A549 (cell line): ENCODE measurements at regions of chr9 and their contacts with region 1.

Region 1: GRCh38 chr9:136849038-136849959 is at the start of gene PHPT1:
- DNase-seq: peak; percentile 99 to 100
- ATAC-seq: peak; percentile 53 to 80
- H3K4me3 ChIP-seq: peak within 1 kb of the TSS; percentile 87
- H3K27ac ChIP-seq: peak within 1 kb of the TSS; percentile 96 to 97
- H3K4me1 ChIP-seq: peaks cover 22% of the 10 kb centered on the region
- CTCF ChIP-seq: no peak
- EP300 ChIP-seq: no peak
- POLR2A ChIP-seq: peak; percentile 72
- RAD21 ChIP-seq: 0 out of 5 replicates have a peak, but pooled peaks of 1 of the 2 experiments have one; percentile 17
- polyA plus RNA-seq, gene PHPT1: 104 and 123 TPM in 2 replicates

Region 2: DNA sequence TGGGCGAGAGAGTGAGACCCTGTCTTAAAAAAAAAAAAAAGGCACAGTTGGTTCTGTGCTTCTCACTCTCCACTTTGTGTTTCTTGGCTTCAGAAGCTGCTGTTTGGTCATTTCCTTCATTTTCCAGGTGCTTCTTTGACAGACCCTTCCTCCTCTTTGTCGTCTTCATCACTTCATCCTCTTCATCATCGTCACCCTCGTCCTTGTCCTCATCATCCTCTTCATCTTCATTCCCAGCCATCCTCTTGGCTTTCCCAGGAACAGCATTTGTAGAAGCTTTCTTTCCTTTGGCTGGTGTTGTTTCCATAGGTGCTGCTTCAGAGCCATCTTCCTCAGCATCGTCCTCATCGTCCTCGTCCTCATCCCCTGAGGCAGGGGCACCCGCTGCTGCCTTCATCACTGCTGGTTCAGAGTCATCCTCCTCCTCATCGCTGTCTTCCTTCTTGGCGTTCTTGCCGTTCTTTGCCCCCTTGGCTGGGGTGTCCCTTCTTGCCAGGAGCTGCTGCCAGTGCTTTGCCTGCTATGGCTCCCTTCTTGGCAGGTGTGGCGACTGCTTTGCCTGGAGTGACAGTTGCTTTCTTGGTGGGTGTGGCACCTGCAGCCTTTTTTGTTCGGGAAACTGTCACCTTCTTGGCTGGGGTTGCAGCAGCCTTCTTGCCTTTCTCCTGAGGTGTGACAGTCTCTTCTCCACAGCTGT is 34.4 kb before region 1 on chr9:
- CTCF ChIA-PET with region 1: interaction called, 44 read pairs
- POLR2A ChIA-PET with region 1: no interaction called
- DNase-seq: no peak
- ATAC-seq: no peak
- H3K4me3 ChIP-seq: no peak overlapping the region
- H3K27ac ChIP-seq: no peak overlapping the region
- H3K4me1 ChIP-seq: peaks cover 5% of the 10 kb centered on the region; the same call in 2 of the 3 replicates
- CTCF ChIP-seq: no peak
- EP300 ChIP-seq: no peak
- POLR2A ChIP-seq: no peak
- RAD21 ChIP-seq: no peak

Region 3: DNA sequence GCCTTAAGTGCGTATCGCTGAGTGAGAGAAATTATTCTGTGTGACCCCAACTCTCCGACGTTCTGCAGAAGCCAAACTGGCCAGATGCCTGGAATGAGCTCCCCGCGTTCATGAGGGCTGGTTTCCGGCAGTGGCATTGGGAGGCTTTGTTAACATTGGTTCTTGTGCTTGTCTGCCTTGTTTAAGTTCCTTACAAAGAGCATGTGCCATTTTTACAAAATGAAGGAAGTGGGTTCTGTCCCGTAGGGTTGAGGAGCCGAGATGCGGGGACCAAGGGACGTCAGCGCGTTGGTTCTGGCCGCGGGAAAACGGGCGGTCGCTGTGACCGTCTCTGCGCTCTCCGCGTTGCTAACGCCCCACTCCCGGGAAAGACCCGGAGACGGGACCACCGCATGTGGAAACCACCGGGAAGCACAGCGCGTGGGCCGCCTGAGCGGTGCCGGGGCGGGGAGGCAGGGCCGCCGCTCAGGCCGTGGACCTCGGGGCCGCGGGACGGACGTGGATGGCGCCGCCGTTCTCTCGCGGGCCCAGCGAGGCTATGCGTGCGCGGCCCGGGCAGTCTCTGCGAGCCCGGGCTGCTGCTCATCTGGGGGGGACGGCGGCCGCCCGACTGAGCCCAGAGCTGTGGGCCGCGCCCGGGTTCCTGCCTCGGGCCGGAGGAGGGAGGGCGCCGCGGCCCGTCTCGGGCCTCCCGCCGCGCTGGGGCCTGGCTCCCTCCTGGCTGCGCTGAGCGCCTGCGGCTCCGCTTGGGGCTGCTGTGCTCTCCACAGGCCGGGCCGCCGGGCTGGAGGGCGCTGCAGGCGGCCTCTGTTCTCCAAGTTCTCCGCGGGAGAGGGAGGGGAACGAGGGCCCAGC is 28.1 kb before region 1 on chr9:
- CTCF ChIA-PET with region 1: interaction called, 44 read pairs
- POLR2A ChIA-PET with region 1: no interaction called
- DNase-seq: no peak
- ATAC-seq: no peak
- H3K4me3 ChIP-seq: no peak overlapping the region
- H3K27ac ChIP-seq: no peak overlapping the region
- H3K4me1 ChIP-seq: no peaks in the 10 kb centered on the region
- CTCF ChIP-seq: no peak
- EP300 ChIP-seq: no peak
- POLR2A ChIP-seq: no peak
- RAD21 ChIP-seq: no peak

Region 4: GRCh38 chr9:136829981-136830885 is 19.1 kb before region 1 on chr9:
- CTCF ChIA-PET with region 1: interaction called, 72 read pairs
- POLR2A ChIA-PET with region 1: no interaction called
- DNase-seq: no peak
- ATAC-seq: no peak
- H3K4me3 ChIP-seq: no peak overlapping the region
- H3K27ac ChIP-seq: no peak overlapping the region
- H3K4me1 ChIP-seq: no peaks in the 10 kb centered on the region
- CTCF ChIP-seq: no peak
- EP300 ChIP-seq: no peak
- POLR2A ChIP-seq: no peak
- RAD21 ChIP-seq: no peak

Region 5: DNA sequence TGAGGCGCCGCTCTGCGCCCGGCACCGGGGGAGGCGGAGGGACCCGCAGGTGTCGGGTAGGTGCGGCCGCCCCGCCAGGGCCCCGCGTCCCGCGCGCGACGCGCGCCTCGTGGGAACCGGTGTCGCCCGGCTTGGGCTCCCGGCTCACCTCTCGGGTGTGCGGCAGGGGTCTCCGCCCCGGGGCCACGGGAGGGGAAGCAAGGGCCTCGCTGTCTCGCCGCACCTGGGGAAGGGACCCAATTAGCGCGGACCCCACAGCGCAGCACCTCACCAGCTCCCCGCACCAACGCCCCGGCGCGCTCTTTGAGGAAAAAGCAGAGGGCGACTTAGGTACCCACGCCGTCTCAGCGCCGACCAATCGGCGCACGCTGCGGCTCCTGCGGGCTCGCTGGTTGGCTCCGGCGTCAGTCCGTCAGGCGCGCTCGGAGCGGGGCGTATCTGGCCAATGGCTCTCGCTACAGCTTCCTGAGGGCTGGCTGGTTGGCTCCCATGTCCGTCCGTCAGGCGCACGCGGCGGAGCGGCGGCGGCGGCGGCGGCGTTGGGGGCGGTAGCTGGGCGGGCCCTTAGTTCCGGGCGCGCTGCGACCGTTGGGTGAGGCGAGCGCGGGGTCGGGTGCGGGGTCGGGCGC is 36.8 kb after region 1 on chr9 and contains the start of gene TRAF2:
- CTCF ChIA-PET with region 1: interaction called, 23 read pairs
- POLR2A ChIA-PET with region 1: interaction called, 11 read pairs
- DNase-seq: peak; percentile 99 to 100
- ATAC-seq: peak; percentile 82 to 86
- H3K4me3 ChIP-seq: peak within 1 kb of the TSS; percentile 99
- H3K27ac ChIP-seq: peak within 1 kb of the TSS; percentile 98 to 99
- H3K4me1 ChIP-seq: peaks cover 57% of the 10 kb centered on the region
- CTCF ChIP-seq: no peak
- EP300 ChIP-seq: no peak
- POLR2A ChIP-seq: peak; percentile 93
- RAD21 ChIP-seq: no peak
- polyA plus RNA-seq, gene TRAF2: 23.8 and 24.5 TPM in 2 replicates

Region 6: GRCh38 chr9:137095664-137096517 is 246.6 kb after region 1 on chr9:
- CTCF ChIA-PET with region 1: no interaction called
- POLR2A ChIA-PET with region 1: no interaction called
- DNase-seq: no peak
- ATAC-seq: peak; percentile 40 to 63; a peak in 3 of 6 replicates
- H3K4me3 ChIP-seq: no peak overlapping the region
- H3K27ac ChIP-seq: no peak overlapping the region
- H3K4me1 ChIP-seq: no peaks in the 10 kb centered on the region
- CTCF ChIP-seq: no peak
- EP300 ChIP-seq: no peak
- POLR2A ChIP-seq: no peak
- RAD21 ChIP-seq: no peak